ENCODE measurements at regions of chr16 and their contacts with region 1.

Region 1: GRCh38 chr16:22077700-22078313 is 14.5 kb upstream of the VWA3A start:
- DNase-seq: peak; percentile 50 to 61
- ATAC-seq: peak; percentile 86 to 90
- H3K4me3 ChIP-seq: no peak overlapping the region
- H3K27ac ChIP-seq: no peak overlapping the region
- H3K4me1 ChIP-seq: no peaks in the 10 kb centered on the region
- CTCF ChIP-seq: peak; percentile 95
- EP300 ChIP-seq: no peak
- POLR2A ChIP-seq: no peak
- RAD21 ChIP-seq: peak; percentile 85 to 90

Region 2: GRCh38 chr16:21980032-21980431 is 97.8 kb before region 1 on chr16:
- CTCF ChIA-PET with region 1: interaction called, 11 read pairs
- POLR2A ChIA-PET with region 1: no interaction called
- DNase-seq: no peak
- ATAC-seq: no peak; a peak in 1 of 6 replicates
- H3K4me3 ChIP-seq: no peak overlapping the region
- H3K27ac ChIP-seq: no peak overlapping the region
- H3K4me1 ChIP-seq: no peaks in the 10 kb centered on the region
- CTCF ChIP-seq: no peak
- EP300 ChIP-seq: no peak
- POLR2A ChIP-seq: no peak
- RAD21 ChIP-seq: no peak

Region 3: DNA sequence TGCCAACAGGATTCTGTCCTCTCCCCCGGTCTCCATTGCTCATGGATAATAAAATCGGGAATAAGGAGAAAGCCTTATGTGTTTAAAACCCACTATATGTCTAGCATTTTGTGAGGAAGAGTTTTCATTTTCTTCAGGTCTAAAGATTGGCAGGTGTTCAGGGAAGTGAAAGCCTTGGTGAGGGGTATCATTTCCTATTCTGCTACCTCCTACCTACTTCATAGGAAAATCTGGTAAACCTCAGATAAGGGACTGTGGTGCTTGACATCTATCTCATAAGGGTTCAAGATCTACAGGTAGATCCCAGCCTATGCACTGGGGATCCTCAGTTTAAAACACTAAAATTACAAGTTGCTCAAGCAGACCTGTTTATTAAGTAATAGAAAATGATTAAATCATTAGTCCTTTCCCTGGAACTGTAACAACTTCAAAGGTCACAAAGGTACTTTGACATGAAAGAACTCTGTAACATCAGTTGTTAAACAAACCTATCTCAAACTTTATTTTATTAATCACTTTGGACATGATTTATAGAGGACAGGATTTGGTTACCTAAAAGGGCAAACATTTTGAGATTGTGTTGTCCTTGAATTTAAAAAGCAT is 63.4 kb before region 1 on chr16:
- CTCF ChIA-PET with region 1: interaction called, 226 read pairs
- POLR2A ChIA-PET with region 1: interaction called, 17 read pairs
- DNase-seq: no peak
- ATAC-seq: no peak
- H3K4me3 ChIP-seq: no peak overlapping the region
- H3K27ac ChIP-seq: no peak overlapping the region
- H3K4me1 ChIP-seq: peaks cover 12% of the 10 kb centered on the region; the same call in 1 of the 3 replicates
- CTCF ChIP-seq: no peak
- EP300 ChIP-seq: no peak
- POLR2A ChIP-seq: no peak
- RAD21 ChIP-seq: no peak

Region 4: GRCh38 chr16:22055878-22056277 is 21.9 kb before region 1 on chr16:
- CTCF ChIA-PET with region 1: interaction called, 42 read pairs
- POLR2A ChIA-PET with region 1: no interaction called
- DNase-seq: no peak
- ATAC-seq: 0 out of 6 replicates have a peak, but pooled peaks of 1 of the 2 experiments have one; percentile 33
- H3K4me3 ChIP-seq: no peak overlapping the region
- H3K27ac ChIP-seq: no peak overlapping the region
- H3K4me1 ChIP-seq: no peaks in the 10 kb centered on the region
- CTCF ChIP-seq: no peak
- EP300 ChIP-seq: no peak
- POLR2A ChIP-seq: no peak
- RAD21 ChIP-seq: no peak

Region 5: DNA sequence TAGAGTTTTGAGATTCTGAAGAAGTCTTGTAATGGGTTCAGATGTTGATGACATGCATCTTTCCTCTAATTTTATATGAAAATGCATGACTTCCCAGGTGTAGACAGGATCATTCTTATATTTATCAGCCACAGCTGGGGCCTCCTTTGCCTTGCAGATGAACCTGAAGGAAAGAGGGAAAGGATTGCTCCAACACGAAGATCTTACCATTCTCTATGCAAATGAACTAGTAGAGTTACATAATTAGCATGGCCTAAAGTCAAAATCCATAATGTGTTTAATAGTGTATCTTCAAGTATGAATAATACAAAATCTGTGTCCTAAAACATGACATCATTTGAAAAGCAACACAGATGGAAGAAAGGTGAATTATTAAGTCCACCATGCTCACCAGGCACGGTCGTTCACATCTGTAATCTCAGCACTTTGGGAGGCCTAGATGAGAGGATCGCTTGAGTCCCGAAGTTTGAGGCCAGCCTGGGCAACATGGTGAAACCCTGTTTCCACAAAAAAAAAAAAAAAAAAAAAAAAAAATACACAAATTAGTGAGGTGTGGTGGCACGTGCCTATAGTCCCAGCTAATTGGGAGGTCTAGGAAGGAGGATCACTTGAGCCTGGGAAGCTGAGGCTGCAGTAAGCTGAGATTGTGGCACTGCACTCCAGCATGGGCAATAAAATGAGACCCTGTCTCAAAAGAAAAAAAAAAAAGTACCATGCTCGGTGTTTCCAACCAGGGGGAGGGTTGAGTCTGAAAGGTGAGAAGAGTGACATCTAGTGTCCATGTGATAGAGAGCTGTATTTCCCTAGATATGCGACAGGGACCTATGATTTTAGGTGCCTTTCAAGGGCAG is 20.8 kb after region 1 on chr16:
- CTCF ChIA-PET with region 1: interaction called, 78 read pairs
- POLR2A ChIA-PET with region 1: no interaction called
- DNase-seq: peak; percentile 66 to 80
- ATAC-seq: peak; percentile 94 to 97
- H3K4me3 ChIP-seq: no peak overlapping the region
- H3K27ac ChIP-seq: no peak overlapping the region
- H3K4me1 ChIP-seq: no peaks in the 10 kb centered on the region
- CTCF ChIP-seq: peak; percentile 78
- EP300 ChIP-seq: no peak
- POLR2A ChIP-seq: no peak
- RAD21 ChIP-seq: peak; percentile 63 to 76

Region 6: DNA sequence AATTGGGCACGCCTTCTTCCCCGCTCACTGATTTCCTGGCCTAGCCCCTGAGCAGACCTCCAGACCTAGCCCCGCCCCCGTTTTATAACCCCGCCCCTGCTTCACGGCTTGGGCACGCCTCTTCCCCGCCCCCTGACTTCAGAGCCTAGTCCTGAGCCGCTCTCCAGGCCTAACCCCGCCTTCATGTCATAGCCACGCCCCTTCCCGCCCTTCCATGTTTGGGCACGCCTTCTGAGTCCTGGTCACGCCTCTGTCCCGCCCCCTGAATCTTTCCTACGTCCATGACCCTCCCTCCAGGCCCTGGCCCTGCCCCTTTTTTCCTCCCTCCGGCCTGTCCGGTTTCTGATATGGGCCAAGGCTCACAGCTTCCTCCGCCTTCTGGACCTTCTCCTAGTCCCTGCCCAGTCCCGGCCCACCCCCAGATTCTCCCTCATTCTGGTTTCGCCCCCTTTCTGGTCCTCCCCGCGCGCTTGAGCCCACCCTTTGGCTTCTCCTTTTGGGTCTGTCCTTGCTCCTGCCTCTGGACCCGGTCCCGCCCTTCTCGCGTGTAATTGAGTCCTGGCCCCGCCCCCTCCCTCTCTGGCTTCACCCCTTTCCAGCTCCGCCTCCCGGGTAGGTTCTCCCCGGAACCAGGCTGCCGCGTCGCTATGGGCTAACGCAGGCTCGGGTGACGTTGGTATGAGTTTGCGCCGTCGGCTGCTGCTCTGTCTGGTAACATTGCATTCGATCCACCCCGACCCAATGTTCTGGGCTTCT is 113.1 kb after region 1 on chr16:
- CTCF ChIA-PET with region 1: interaction called, 52 read pairs
- POLR2A ChIA-PET with region 1: interaction called, 5 read pairs
- DNase-seq: peak; percentile 91 to 97
- ATAC-seq: peak; percentile 66 to 81
- H3K4me3 ChIP-seq: peak overlapping the region; percentile 80
- H3K27ac ChIP-seq: peak overlapping the region; percentile 82 to 88
- H3K4me1 ChIP-seq: peaks cover 14% of the 10 kb centered on the region
- CTCF ChIP-seq: no peak
- EP300 ChIP-seq: no peak
- POLR2A ChIP-seq: peak; percentile 63
- RAD21 ChIP-seq: no peak

Region 7: GRCh38 chr16:22262460-22262859 is 184.7 kb after region 1 on chr16:
- CTCF ChIA-PET with region 1: no interaction called
- POLR2A ChIA-PET with region 1: no interaction called
- DNase-seq: no peak
- ATAC-seq: no peak
- H3K4me3 ChIP-seq: no peak overlapping the region
- H3K27ac ChIP-seq: no peak overlapping the region
- H3K4me1 ChIP-seq: no peaks in the 10 kb centered on the region
- CTCF ChIP-seq: no peak
- EP300 ChIP-seq: no peak
- POLR2A ChIP-seq: no peak
- RAD21 ChIP-seq: no peak